Activated CD4-positive, alpha-beta T cell treated with anti-CD3 and anti-CD28 coated beads, Interleukin-2, amount 10 ng/mL, durations not matched to agents 24 days and 14 days (primary cell): ENCODE measurements at regions of chr12 and their contacts with region 1.

Region 1: GRCh38 chr12:24838531-24838950 is 110.4 kb downstream of the BCAT1 start:
- DNase-seq: peak; percentile 76
- H3K4me3 Mint-ChIP-seq: peak overlapping the region; percentile 63
- H3K27ac Mint-ChIP-seq: peak overlapping the region; percentile 87
- H3K4me1 Mint-ChIP-seq: peaks cover 40% of the 10 kb centered on the region
- H3K27me3 Mint-ChIP-seq: no peaks in the 10 kb centered on the region

Region 2: GRCh38 chr12:24728366-24728765 is 110.2 kb before region 1 on chr12:
- intact Hi-C with region 1: loop called (anchors 1 kb)
- DNase-seq: no peak
- H3K4me3 Mint-ChIP-seq: no peak overlapping the region
- H3K27ac Mint-ChIP-seq: no peak overlapping the region
- H3K4me1 Mint-ChIP-seq: peaks cover 24% of the 10 kb centered on the region
- H3K27me3 Mint-ChIP-seq: no peaks in the 10 kb centered on the region

Region 3: DNA sequence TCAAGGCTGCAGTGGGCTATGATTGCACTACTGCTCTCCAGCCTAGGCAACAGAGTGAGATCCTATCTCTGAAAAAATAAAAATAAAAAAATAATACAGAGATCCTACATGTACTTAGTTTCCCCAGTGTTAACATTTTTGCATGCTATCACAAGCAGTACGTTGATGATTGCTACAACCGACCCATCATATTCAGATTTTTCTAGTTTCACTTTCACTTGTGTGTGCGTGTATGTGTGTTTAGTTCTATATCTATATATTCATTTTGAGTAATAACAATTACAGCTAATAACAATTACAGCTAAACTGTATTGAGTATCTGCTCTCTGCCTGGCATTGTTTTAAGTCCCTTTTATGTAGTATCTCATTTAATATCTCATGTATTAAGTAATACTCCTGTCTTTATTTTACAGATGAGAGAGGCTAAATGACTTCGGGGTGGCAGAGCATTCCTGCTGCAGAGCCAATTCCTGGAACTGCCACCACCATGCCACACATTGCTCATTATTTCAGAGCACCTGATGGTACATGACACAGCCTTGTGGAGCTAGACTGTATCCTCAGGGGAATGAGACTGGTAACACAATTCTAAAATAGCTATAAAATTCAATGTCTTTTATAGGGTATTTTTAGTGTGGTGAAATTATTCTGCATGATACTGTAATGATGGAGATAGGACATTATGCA is 42.7 kb before region 1 on chr12:
- intact Hi-C with region 1: loop called (anchors 2 kb)
- DNase-seq: peak; percentile 63
- H3K4me3 Mint-ChIP-seq: peak overlapping the region; percentile 71
- H3K27ac Mint-ChIP-seq: peak overlapping the region; percentile 46
- H3K4me1 Mint-ChIP-seq: peaks cover 35% of the 10 kb centered on the region
- H3K27me3 Mint-ChIP-seq: no peaks in the 10 kb centered on the region

Region 4: GRCh38 chr12:24902511-24903328 is 64.2 kb after region 1 on chr12:
- intact Hi-C with region 1: loop called (anchors 1 kb)
- DNase-seq: peak; percentile 85
- H3K4me3 Mint-ChIP-seq: peak overlapping the region; percentile 98
- H3K27ac Mint-ChIP-seq: peak overlapping the region; percentile 98
- H3K4me1 Mint-ChIP-seq: peaks cover 35% of the 10 kb centered on the region
- H3K27me3 Mint-ChIP-seq: peaks cover 4% of the 10 kb centered on the region

Region 5: DNA sequence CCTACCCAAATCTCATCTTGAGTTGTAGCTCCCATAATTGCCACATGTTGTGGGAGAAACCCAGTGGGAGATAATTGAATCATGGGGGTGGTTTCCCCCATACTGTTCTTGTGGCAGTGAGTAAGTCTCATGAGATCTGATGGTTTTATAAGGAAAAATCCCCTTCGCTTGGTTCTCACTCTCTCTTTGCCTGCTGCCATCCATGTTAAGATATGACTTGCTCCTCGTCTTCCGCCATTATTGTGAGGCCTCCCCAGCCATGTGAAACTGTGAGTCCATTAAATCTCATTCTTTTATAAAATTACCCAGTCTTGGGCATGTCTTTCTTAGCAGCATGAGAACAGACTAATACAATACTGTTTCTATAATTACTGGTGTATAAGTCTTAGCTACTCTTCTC is 116.8 kb after region 1 on chr12:
- intact Hi-C with region 1: loop called (anchors 1 kb)
- DNase-seq: no peak
- H3K4me3 Mint-ChIP-seq: no peak overlapping the region
- H3K27ac Mint-ChIP-seq: peak overlapping the region; percentile 22
- H3K4me1 Mint-ChIP-seq: peaks cover 36% of the 10 kb centered on the region
- H3K27me3 Mint-ChIP-seq: peaks cover 3% of the 10 kb centered on the region

Region 6: DNA sequence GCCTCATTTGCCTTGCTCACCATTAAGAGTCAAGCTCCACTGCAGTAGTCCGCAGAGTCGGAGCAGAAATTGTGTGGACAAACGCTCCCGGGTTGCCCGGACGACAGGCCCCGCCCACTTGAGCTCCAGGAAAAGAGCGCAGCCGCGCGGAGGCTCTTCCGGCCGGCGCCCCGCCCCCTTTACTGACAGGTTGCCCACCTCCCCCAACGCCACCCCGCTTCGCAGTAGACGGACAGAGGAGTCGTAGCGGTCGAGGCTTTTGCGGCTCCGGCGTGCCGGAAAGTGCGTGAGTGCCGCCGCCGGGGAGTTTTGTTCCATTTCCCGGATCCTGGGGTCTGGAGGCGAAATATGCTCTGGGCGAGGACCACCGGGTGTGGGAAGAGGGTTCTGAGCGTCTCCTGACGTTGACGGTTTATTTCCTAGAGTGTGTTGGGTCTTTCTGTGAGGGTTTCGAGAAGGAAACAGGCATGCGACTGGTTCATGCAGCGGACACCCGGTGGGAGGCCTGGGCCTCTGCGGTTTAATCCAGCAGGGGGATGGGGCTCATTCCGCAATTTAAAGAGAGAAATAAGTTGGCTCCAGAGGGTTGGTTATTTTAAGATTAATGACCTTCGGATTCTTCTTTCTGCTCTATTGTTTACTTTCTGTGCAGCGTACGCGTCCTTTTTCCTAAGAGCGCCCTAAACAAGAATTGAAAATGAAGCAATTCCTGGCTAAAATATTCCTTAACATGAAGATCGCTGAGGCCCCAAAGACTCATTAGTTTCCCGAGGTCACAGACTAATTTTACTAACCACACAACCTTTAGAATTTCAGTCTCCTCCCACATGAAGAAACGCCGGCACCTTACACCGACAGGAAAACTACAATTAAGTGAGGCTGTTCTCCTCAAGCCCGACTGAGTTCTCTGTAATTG is 356.8 kb after region 1 on chr12 and contains the starts of genes DNAI7 and ETFRF1:
- intact Hi-C with region 1: loop called (anchors 5 kb)
- DNase-seq: peak; percentile 98
- H3K4me3 Mint-ChIP-seq: peak within 1 kb of the TSS; percentile 94
- H3K27ac Mint-ChIP-seq: peak within 1 kb of the TSS; percentile 93
- H3K4me1 Mint-ChIP-seq: peaks cover 23% of the 10 kb centered on the region
- H3K27me3 Mint-ChIP-seq: no peaks in the 10 kb centered on the region
- total RNA-seq, gene DNAI7: not detected in 2 replicates
- total RNA-seq, gene ETFRF1: 9.9 TPM in 2 replicates

Region 7: DNA sequence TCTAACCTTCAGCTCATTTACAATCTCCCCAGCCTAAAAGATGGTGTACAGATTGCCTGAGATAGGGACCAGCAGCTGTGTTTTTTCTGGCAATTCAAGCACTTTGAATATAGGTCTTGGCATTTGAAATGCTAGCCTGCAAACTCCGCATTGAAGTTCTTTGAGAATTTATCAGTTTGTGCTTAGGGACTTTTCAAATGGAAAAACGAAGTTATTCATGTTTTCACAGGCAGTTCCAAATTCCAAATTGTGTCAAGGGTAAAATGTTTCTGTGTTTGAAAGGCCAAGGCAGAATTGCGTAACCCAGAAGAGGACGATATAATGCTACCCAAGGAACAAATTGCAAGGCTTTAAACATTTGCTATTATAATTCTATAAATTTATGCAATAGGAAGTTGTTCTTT is 951.0 kb after region 1 on chr12:
- intact Hi-C with region 1: no loop called
- DNase-seq: no peak
- H3K4me3 Mint-ChIP-seq: no peak overlapping the region
- H3K27ac Mint-ChIP-seq: no peak overlapping the region
- H3K4me1 Mint-ChIP-seq: no peaks in the 10 kb centered on the region
- H3K27me3 Mint-ChIP-seq: peaks cover 3% of the 10 kb centered on the region